Activated CD8-positive, alpha-beta T cell treated with anti-CD3 and anti-CD28 coated beads for 36 hours (primary cell): ENCODE measurements at regions of chr7 and their contacts with region 1.

Region 1: GRCh38 chr7:100407285-100408180 is 21.0 kb downstream of the ZCWPW1 start:
- DNase-seq: peak; percentile 59
- ATAC-seq: peak; percentile 98
- H3K4me3 Mint-ChIP-seq: no peak overlapping the region
- H3K27ac Mint-ChIP-seq: no peak overlapping the region
- H3K4me1 Mint-ChIP-seq: peaks cover 6% of the 10 kb centered on the region
- H3K27me3 Mint-ChIP-seq: no peaks in the 10 kb centered on the region
- CTCF ChIP-seq: peak; percentile 65

Region 2: DNA sequence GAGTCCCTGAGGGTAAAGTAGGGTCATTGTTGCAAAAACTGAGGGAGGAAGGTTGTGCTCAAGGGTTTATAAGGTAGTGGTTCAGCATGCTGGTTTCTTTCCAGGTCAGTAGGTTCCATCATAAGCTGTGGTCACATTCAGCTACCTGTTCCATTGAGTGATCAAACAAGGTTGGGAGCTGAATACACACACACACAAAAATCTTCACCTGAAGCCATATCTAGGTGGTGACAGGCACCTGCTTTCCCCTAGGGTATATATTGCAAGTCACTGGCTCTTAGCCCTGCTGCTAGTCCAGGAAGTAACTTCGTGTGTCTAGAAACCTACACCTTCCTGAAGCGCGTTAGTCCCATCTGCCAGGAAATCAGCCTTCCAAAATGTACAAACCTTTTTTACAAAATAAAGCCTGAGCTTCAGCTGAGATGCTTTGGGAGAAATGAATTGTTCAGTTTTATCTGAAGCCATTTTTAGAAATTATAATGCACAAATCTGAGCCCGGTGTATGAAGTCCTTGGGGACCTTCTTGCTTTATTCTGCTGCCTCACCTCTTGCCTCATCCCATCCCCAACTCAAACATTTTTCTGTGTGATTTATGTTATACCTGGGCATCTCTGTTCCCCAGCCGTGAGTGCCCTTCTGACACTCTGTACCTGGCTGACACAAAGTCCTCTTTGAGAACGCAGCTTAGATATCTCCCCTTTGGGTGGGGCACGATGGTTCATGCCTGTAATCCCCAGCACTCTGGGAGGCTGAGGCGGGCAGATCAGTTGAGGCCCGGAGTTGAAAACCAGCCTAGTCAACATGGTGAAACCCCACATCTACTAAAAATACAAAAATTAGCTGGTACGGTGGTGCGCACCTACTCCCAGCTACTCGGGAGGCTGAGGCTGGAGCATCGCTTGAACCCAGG is 269.4 kb before region 1 on chr7:
- CTCF ChIA-PET with region 1: interaction called, 38 read pairs
- POLR2A ChIA-PET with region 1: interaction called, 5 read pairs
- intact Hi-C with region 1: loop called (anchors 10 kb)
- DNase-seq: no peak
- ATAC-seq: no peak
- H3K4me3 Mint-ChIP-seq: no peak overlapping the region
- H3K27ac Mint-ChIP-seq: peak overlapping the region; percentile 65
- H3K4me1 Mint-ChIP-seq: peaks cover 13% of the 10 kb centered on the region
- H3K27me3 Mint-ChIP-seq: no peaks in the 10 kb centered on the region
- CTCF ChIP-seq: no peak

Region 3: DNA sequence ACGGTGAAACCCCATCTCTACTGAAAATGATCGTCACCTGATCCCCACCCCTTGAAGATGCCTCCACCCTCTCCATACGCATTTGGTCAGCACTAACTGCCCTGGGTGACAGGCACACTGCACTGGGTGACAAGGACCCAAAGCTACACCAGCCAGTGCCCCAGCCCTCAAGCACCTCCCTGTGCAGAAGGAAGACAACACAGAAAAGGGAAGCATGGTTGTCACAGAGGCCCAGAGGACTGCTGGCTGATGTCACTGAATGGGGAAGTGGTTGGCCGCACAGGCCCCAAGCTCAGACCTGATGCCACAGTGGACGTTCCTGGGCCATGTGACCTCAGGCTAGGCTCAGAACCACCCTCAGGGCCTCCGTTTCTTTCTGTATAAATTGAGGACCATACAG is 38.4 kb before region 1 on chr7:
- CTCF ChIA-PET with region 1: interaction called, 11 read pairs
- POLR2A ChIA-PET with region 1: no interaction called
- intact Hi-C with region 1: loop called (anchors 5 kb)
- DNase-seq: no peak
- ATAC-seq: no peak
- H3K4me3 Mint-ChIP-seq: no peak overlapping the region
- H3K27ac Mint-ChIP-seq: peak overlapping the region; percentile 61
- H3K4me1 Mint-ChIP-seq: peaks cover 54% of the 10 kb centered on the region
- H3K27me3 Mint-ChIP-seq: no peaks in the 10 kb centered on the region
- CTCF ChIP-seq: no peak

Region 4: DNA sequence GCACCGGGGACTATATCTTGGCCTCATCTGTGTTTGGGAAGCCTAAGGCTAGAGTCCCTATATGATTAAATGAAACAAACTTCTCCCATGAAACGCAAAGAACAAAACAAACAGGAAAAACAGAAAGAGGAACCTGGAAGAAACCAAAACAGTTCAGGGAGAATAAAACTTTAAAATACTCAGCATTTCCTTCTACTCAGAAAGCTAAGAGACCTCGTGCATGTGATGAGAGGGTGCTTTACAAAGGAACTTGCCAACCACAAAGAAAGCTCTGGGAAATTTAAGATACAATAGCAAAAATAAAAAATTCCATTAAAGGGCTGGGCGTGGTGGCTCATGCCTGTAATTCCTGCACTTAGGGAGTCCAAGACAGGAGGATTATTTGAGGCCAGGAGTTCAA is 27.3 kb before region 1 on chr7:
- CTCF ChIA-PET with region 1: interaction called, 36 read pairs
- POLR2A ChIA-PET with region 1: no interaction called
- intact Hi-C with region 1: no loop called
- DNase-seq: no peak
- ATAC-seq: no peak
- H3K4me3 Mint-ChIP-seq: no peak overlapping the region
- H3K27ac Mint-ChIP-seq: no peak overlapping the region
- H3K4me1 Mint-ChIP-seq: peaks cover 9% of the 10 kb centered on the region
- H3K27me3 Mint-ChIP-seq: no peaks in the 10 kb centered on the region
- CTCF ChIP-seq: no peak

Region 5: GRCh38 chr7:100387695-100388094 is 19.8 kb before region 1 on chr7:
- CTCF ChIA-PET with region 1: interaction called, 36 read pairs
- POLR2A ChIA-PET with region 1: no interaction called
- intact Hi-C with region 1: no loop called
- DNase-seq: no peak
- ATAC-seq: no peak
- H3K4me3 Mint-ChIP-seq: no peak overlapping the region
- H3K27ac Mint-ChIP-seq: no peak overlapping the region
- H3K4me1 Mint-ChIP-seq: peaks cover 3% of the 10 kb centered on the region
- H3K27me3 Mint-ChIP-seq: peaks cover 5% of the 10 kb centered on the region
- CTCF ChIP-seq: no peak

Region 6: GRCh38 chr7:100396421-100396982 is 11.0 kb before region 1 on chr7:
- CTCF ChIA-PET with region 1: interaction called, 20 read pairs
- POLR2A ChIA-PET with region 1: interaction called, 4 read pairs
- intact Hi-C with region 1: no loop called
- DNase-seq: peak; percentile 87
- ATAC-seq: peak; percentile 93
- H3K4me3 Mint-ChIP-seq: no peak overlapping the region
- H3K27ac Mint-ChIP-seq: peak overlapping the region; percentile 50
- H3K4me1 Mint-ChIP-seq: peaks cover 18% of the 10 kb centered on the region
- H3K27me3 Mint-ChIP-seq: peaks cover 7% of the 10 kb centered on the region
- CTCF ChIP-seq: no peak

Region 7: DNA sequence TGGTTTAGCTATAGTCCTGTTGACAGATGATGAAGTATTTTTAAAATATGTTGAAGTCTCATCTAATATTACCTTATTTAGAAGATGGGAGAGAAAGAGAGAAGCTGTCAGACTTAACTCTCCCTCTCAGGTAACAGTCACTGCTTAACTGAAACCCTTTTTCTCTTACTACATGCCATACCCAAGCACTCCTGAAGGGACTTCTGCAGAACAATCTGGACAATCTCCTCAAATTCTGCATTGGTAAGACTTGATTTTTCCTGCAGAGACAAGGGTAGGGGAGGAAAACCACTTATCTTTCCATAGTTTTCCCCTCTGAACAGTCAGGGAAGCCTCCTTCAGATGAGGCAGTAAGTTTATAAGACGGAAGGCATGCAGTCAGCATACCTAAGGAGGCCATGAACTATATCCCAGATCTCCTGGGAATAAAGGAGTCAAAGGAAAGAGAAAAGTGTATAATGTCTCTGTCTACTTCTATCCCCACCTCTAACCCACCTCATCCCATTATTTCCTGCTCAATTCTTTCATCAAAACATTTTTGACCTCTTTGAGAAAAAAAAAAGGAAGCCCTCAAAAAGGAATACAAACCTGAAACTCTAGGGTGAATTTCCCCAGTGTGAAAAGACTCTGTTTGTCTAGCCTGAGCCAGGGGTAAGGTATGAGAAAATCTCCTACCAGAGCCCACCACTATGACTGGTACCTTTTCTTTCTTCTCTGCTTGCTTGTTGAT is 11.6 kb after region 1 on chr7:
- CTCF ChIA-PET with region 1: interaction called, 34 read pairs
- POLR2A ChIA-PET with region 1: no interaction called
- intact Hi-C with region 1: no loop called
- DNase-seq: no peak
- ATAC-seq: no peak
- H3K4me3 Mint-ChIP-seq: no peak overlapping the region
- H3K27ac Mint-ChIP-seq: no peak overlapping the region
- H3K4me1 Mint-ChIP-seq: peaks cover 4% of the 10 kb centered on the region
- H3K27me3 Mint-ChIP-seq: no peaks in the 10 kb centered on the region
- CTCF ChIP-seq: no peak